A673 (cell line): ENCODE measurements at regions of chr3 and their contacts with region 1.

Region 1: GRCh38 chr3:34277110-34277509 is 478.7 kb downstream of the PDCD6IP start:
- DNase-seq: no peak
- H3K4me3 ChIP-seq: no peak overlapping the region
- H3K27ac ChIP-seq: peak overlapping the region; percentile 99
- H3K4me1 ChIP-seq: peaks cover 33% of the 10 kb centered on the region
- H3K27me3 ChIP-seq: no peaks in the 10 kb centered on the region
- CTCF ChIP-seq: no peak

Region 2: GRCh38 chr3:33883538-33883950 is 393.6 kb before region 1 on chr3:
- CTCF ChIA-PET with region 1: interaction called, 3 read pairs
- POLR2A ChIA-PET with region 1: interaction called, 4 read pairs
- intact Hi-C with region 1: loop called (anchors 1 kb)
- DNase-seq: peak; percentile 85
- H3K4me3 ChIP-seq: peak overlapping the region; percentile 15
- H3K27ac ChIP-seq: peak overlapping the region; percentile 81
- H3K4me1 ChIP-seq: peaks cover 29% of the 10 kb centered on the region
- H3K27me3 ChIP-seq: no peaks in the 10 kb centered on the region
- CTCF ChIP-seq: peak; percentile 87

Region 3: GRCh38 chr3:33954956-33955355 is 322.2 kb before region 1 on chr3:
- CTCF ChIA-PET with region 1: interaction called, 3 read pairs
- POLR2A ChIA-PET with region 1: no interaction called
- intact Hi-C with region 1: loop called (anchors 1 kb)
- DNase-seq: peak; percentile 80
- H3K4me3 ChIP-seq: no peak overlapping the region
- H3K27ac ChIP-seq: peak overlapping the region; percentile 98
- H3K4me1 ChIP-seq: peaks cover 55% of the 10 kb centered on the region
- H3K27me3 ChIP-seq: no peaks in the 10 kb centered on the region
- CTCF ChIP-seq: peak; percentile 66

Region 4: GRCh38 chr3:34012102-34012461 is 265.0 kb before region 1 on chr3:
- CTCF ChIA-PET with region 1: no interaction called
- POLR2A ChIA-PET with region 1: no interaction called
- intact Hi-C with region 1: loop called (anchors 5 kb)
- DNase-seq: peak; percentile 87
- H3K4me3 ChIP-seq: no peak overlapping the region
- H3K27ac ChIP-seq: peak overlapping the region; percentile 85
- H3K4me1 ChIP-seq: peaks cover 76% of the 10 kb centered on the region
- H3K27me3 ChIP-seq: no peaks in the 10 kb centered on the region
- CTCF ChIP-seq: no peak

Region 5: DNA sequence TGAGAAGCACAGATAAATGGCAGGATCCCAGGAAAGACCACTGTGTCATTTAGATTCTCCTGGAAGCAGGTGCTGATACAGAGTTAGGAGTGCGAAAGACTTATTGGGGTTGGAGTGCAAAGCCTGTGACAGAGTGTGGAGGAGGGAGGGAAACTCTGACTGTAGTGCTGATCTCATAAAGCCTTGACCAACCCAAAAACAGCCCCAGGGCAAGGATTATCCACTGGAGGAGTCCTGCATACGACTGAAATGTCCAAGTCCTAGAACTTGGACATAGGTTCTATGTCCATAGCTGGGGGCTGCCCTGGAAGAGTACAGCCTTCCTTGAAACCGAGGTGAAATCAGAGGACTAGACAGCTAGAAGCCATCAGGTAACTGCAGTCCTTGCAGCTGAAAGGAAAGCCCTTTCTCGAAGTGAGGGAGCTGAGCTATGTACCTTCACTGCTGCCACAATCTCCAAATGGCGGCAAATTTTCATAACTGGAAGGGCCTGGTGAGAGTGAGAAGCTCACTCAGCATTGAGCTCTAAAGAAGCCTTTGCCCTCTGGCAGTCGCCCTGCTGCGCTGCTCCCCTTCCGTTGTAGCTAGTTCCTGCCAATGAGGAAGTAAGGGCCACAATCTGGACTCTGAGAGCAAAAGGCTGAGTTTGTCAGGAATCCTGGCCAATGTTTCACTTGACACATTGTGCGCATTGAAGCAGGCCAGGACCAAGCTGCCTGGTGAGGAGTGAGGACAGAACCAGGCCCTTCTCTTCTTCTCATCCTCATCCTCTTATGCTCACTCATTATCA is 100.7 kb after region 1 on chr3:
- CTCF ChIA-PET with region 1: no interaction called
- POLR2A ChIA-PET with region 1: no interaction called
- intact Hi-C with region 1: no loop called
- DNase-seq: no peak
- H3K4me3 ChIP-seq: no peak overlapping the region
- H3K27ac ChIP-seq: no peak overlapping the region
- H3K4me1 ChIP-seq: peaks cover 5% of the 10 kb centered on the region
- H3K27me3 ChIP-seq: no peaks in the 10 kb centered on the region
- CTCF ChIP-seq: no peak

Region 6: GRCh38 chr3:34568766-34569165 is 291.7 kb after region 1 on chr3:
- CTCF ChIA-PET with region 1: no interaction called
- POLR2A ChIA-PET with region 1: no interaction called
- intact Hi-C with region 1: loop called (anchors 5 kb)
- DNase-seq: no peak
- H3K4me3 ChIP-seq: no peak overlapping the region
- H3K27ac ChIP-seq: no peak overlapping the region
- H3K4me1 ChIP-seq: peaks cover 9% of the 10 kb centered on the region
- H3K27me3 ChIP-seq: no peaks in the 10 kb centered on the region
- CTCF ChIP-seq: no peak

Region 7: GRCh38 chr3:34998905-34999304 is 721.8 kb after region 1 on chr3:
- CTCF ChIA-PET with region 1: no interaction called
- POLR2A ChIA-PET with region 1: no interaction called
- intact Hi-C with region 1: loop called (anchors 5 kb)
- DNase-seq: peak; percentile 94
- H3K4me3 ChIP-seq: no peak overlapping the region
- H3K27ac ChIP-seq: peak overlapping the region; percentile 97
- H3K4me1 ChIP-seq: peaks cover 76% of the 10 kb centered on the region
- H3K27me3 ChIP-seq: no peaks in the 10 kb centered on the region
- CTCF ChIP-seq: no peak